ENCODE measurements at regions of chr1 and their contacts with region 1.

Region 1: GRCh38 chr1:87045761-87046304 is 131.4 kb downstream of the HS2ST1 start:
- DNase-seq: no peak
- ATAC-seq: no peak
- H3K4me3 ChIP-seq: no peak overlapping the region
- H3K27ac ChIP-seq: no peak overlapping the region
- H3K4me1 ChIP-seq: peaks cover 0 to 6% (median 0%) of the 10 kb centered on the region in 9 donors
- H3K27me3 ChIP-seq: no peaks in the 10 kb centered on the region
- CTCF ChIP-seq: no peak

Region 2: GRCh38 chr1:87024936-87025540 is 20.8 kb before region 1 on chr1:
- intact Hi-C with region 1: loop called in 1 of 10 experiments (anchors 1 kb)
- DNase-seq: no peak
- ATAC-seq: peak in 5 of 8 donors; percentile 44 to 63 (median 57)
- H3K4me3 ChIP-seq: no peak overlapping the region
- H3K27ac ChIP-seq: no peak overlapping the region
- H3K4me1 ChIP-seq: peaks cover 0 to 24% (median 7%) of the 10 kb centered on the region in 9 donors
- H3K27me3 ChIP-seq: no peaks in the 10 kb centered on the region
- CTCF ChIP-seq: peak in 8 of 9 donors; percentile 26 to 67 (median 51)

Region 3: GRCh38 chr1:88189526-88189925 is 1143.7 kb after region 1 on chr1:
- intact Hi-C with region 1: loop called in 1 of 10 experiments (anchors 5 kb)
- DNase-seq: no peak
- ATAC-seq: no peak
- H3K4me3 ChIP-seq: no peak overlapping the region
- H3K27ac ChIP-seq: no peak overlapping the region
- H3K4me1 ChIP-seq: no peaks in the 10 kb centered on the region
- H3K27me3 ChIP-seq: peaks cover 0 to 6% (median 0%) of the 10 kb centered on the region in 7 donors
- CTCF ChIP-seq: no peak